Activated naive CD8-positive, alpha-beta T cell treated with anti-CD3 and anti-CD28 coated beads, Interleukin-2, amount 10 ng/mL, durations not matched to agents 7 days and 5 days (primary cell): ENCODE measurements at regions of chr10 and their contacts with region 1.

Region 1: DNA sequence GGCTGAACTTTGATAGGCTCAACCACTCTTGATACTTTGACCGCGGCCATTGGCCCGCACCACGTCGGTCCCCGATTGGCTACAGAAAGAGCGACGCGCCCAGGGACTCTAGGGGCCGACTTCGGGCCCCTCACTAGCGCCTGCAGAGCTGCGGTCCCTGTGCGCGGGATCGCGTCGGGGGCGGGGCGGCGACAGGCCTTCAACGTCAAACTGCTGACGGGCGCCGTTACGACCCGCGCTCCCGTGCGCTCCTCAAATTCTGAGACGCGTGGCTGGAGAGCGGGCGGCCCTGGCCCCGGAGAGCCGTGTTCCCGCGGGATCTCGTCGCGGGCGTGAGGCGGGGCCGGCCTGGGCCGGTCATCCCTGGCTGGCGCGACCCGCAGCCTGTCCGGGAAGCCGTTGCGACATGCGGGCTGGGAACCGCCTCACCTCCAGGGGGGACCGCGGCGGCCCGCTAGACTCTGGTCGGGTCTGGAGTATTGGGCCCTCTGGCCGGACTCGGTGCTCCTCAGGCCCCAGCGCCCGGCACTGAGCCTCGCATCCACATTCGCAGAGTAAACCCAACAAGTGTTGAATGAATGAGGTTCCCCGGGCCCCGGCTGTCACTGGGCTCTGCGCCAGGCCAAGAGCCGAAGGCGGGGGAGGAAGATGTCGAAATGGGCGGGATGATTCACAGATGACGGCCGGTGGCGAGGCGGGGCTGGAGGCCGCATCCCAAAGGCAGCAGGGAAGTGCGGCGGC is 644 bp upstream of the SLC25A28 start:
- DNase-seq: peak; percentile 89
- ATAC-seq: peak; percentile 93
- H3K4me3 Mint-ChIP-seq: peak overlapping the region; percentile 93
- H3K27ac Mint-ChIP-seq: peak overlapping the region; percentile 96
- H3K4me1 Mint-ChIP-seq: peaks cover 34% of the 10 kb centered on the region
- H3K27me3 Mint-ChIP-seq: peaks cover 7% of the 10 kb centered on the region

Region 2: DNA sequence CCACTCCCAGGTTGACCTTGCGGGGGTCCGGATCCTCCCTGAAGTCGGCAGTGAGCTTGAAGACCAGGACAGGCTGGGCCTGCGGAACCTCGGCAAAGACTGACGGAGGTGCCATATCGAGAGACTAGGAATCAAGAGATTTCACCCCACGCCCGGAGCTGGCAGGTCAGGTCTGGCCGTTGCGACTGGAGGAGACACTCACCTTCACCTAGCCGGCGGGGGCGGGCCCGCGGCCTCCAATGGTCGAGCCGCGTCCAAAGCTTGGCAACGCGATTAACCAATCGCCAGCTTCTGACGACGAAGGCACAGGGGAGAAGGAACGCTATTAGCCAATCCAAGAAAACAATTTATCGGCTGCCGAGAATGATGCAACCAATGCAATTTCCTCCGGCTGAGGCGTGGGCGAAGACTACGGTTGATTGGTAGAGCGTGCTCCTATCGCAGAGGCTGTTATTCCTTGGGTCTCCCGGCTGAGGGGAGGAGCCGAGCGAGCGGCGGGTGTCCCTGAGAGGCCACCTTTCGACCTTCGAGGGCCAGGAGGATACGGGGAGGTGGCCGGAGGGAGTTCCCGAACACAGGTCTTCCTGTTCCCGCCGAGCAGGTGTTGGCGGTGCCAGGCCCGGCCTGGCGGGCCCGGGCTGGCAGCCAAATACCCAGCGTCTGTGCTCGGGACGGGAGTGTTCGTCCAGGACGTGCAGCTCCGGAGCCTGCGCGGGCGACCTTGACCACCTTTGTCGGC is 190.3 kb before region 1 on chr10 and contains the start of gene GOT1:
- POLR2A ChIA-PET with region 1: interaction called, 15 read pairs
- DNase-seq: peak; percentile 90
- ATAC-seq: peak; percentile 97
- H3K4me3 Mint-ChIP-seq: peak within 1 kb of the TSS; percentile 99
- H3K27ac Mint-ChIP-seq: peak within 1 kb of the TSS; percentile 96
- H3K4me1 Mint-ChIP-seq: peaks cover 30% of the 10 kb centered on the region
- H3K27me3 Mint-ChIP-seq: no peaks in the 10 kb centered on the region
- total RNA-seq, gene GOT1: 22.6 to 24.0 TPM

Region 3: DNA sequence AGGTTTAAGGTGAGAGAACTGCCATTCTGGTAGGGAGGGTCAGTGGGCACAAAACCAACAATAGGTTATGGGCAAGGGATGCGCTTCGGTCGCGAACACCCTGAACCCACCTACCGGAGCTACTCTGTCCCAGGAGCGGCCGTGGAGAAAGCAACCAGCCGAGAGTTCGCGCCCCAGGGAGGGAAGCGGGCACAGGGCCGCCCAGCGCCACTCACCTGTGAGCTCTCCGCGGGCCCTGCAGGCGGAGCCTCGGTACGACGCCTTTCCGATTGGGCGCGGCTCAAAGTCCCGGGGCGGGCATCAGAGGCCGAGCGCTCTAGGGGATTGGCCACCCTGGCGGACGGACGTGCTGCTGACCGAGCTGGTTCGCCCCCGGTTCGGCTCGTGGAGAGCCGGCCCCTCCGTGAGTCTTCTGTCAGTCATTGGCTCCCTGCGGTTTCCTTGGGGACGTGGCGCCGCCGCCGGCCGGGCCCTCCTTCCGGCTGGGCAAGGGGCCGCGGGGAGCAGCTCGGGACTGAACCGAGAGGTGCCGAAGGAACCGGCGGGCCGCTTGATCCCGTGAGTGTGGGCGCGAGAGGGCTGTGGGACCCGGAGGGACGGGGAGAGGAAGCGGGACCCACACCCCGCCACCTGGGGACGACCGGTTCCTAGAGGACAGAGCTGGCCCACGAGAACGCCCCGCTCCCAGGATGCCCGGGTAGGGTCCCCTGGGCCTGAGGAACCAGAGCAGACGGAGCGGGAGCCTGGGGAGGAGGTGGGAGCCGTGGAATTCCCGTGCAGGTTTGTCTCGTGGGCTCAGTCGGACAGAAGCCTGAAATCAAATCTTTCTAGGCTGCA is 38.4 kb after region 1 on chr10 and contains the start of gene ENTPD7:
- POLR2A ChIA-PET with region 1: interaction called, 22 read pairs
- DNase-seq: peak; percentile 89
- ATAC-seq: peak; percentile 100
- H3K4me3 Mint-ChIP-seq: peak within 1 kb of the TSS; percentile 92
- H3K27ac Mint-ChIP-seq: peak within 1 kb of the TSS; percentile 75
- H3K4me1 Mint-ChIP-seq: peaks cover 19% of the 10 kb centered on the region
- H3K27me3 Mint-ChIP-seq: peaks cover 16% of the 10 kb centered on the region
- total RNA-seq, gene ENTPD7: 3.3 to 3.5 TPM

Region 4: DNA sequence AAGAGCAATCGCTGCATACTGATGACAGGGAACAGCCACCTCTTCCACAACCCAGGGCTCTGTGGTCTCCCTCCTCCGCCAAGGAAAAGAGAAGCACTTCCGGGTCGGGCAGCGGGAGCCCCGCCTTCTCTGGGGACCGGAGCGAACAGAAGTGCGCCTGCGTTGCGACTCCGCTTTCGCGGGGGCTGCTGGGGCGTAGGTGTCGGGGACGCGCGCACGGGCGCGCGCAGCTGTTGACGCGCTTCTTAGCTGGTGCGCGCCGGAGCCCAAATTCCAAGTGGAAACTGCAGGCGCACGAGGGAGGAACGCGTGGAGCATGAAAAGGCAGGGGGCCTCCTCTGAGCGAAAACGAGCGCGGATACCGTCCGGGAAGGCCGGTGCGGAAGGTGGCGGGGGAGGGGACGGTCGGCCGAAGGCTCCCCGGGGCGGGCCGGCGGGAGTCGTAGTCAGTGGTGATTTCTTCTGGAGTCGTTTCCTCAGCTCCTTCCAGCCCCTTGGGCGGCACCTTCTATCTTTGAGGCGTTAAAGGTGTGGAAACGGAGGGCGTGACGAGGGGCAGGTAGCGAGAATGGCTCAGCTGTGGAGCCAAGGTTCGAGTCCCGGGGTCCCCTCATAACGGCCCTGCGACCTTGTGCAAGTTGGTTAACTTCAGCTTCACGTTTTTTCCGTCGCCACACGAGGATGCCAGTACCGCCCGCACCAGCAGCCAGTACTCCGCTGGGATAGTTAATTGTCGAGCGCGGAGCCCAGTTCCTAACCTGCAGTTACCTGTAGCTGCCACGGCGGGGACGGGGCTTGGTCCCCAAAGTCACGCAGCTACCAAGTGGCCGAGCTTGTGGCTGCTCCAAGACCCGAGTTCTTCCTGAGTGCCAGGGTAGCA is 111.4 kb after region 1 on chr10 and contains the starts of genes COX15 and CUTC:
- POLR2A ChIA-PET with region 1: interaction called, 15 read pairs
- DNase-seq: peak; percentile 95
- ATAC-seq: peak; percentile 96
- H3K4me3 Mint-ChIP-seq: peak within 1 kb of the TSS; percentile 100
- H3K27ac Mint-ChIP-seq: peak within 1 kb of the TSS; percentile 100
- H3K4me1 Mint-ChIP-seq: peaks cover 19% of the 10 kb centered on the region
- H3K27me3 Mint-ChIP-seq: no peaks in the 10 kb centered on the region
- total RNA-seq, gene COX15: 39.4 to 46.0 TPM
- total RNA-seq, gene CUTC: 26.0 to 31.5 TPM